Natural killer cell (primary cell): ENCODE measurements at regions of chr15 and their contacts with region 1.

Region 1: DNA sequence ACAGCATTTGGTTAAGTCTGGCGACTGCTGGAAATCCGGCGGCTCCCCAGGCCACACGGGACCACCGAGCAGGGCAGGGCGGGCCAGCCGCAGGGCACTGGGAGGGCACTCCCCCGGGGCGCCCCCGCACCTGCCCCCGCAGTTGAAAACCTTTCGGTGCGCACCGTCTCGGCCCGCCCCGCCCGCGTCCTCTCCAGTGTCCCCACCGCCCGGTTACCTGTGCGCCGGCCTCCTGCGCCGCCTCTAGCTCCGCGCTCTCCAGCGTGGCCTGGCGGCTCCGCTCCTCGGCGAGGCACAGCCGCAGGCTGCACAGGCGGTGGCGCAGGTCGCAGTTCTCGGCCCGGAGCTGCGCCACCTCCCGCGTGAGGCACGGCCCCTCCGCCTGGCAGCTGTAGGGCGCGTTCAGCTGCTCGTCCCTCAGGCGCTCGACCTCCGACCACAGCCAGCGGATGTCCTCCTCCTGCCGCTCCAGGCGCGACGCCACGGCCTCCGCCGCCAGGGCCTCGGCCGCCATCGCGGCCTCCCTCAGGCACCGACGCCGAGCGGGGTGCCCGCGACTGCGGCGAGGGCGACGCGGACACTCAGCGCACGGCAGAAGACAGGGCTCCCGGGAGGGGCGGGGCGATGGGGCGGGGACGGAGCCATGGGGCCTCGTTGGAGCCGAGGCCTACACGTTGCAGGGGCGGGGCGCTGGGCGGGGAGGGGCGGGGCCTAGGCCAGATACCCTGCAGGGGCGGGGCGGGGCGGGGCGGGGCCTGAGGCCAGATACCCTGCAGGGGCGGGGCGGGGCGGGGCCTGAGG is at the start of gene TARS3:
- DNase-seq: peak; percentile 85 to 96
- ATAC-seq: peak; percentile 89 to 99 (median 91)
- H3K4me3 ChIP-seq: peak within 1 kb of the TSS; percentile 42
- H3K4me3 Mint-ChIP-seq: peak within 1 kb of the TSS; percentile 82
- H3K27ac ChIP-seq: peak within 1 kb of the TSS; percentile 68
- H3K27ac Mint-ChIP-seq: peak within 1 kb of the TSS; percentile 77 to 81
- H3K4me1 ChIP-seq: peaks cover 16% of the 10 kb centered on the region
- H3K4me1 Mint-ChIP-seq: peaks cover 19 to 27% of the 10 kb centered on the region in 2 donors
- H3K27me3 ChIP-seq: no peaks in the 10 kb centered on the region
- H3K27me3 Mint-ChIP-seq: no peaks in the 10 kb centered on the region
- CTCF ChIP-seq: no peak
- total RNA-seq, gene TARS3: 11.6 to 20.5 (median 12.1) TPM

Region 2: GRCh38 chr15:101558221-101558933 is 165.7 kb before region 1 on chr15:
- intact Hi-C with region 1: no loop called
- DNase-seq: no peak
- ATAC-seq: no peak
- H3K4me3 ChIP-seq: no peak overlapping the region
- H3K4me3 Mint-ChIP-seq: no peak overlapping the region
- H3K27ac ChIP-seq: no peak overlapping the region
- H3K27ac Mint-ChIP-seq: no peak overlapping the region
- H3K4me1 ChIP-seq: no peaks in the 10 kb centered on the region
- H3K4me1 Mint-ChIP-seq: no peaks in the 10 kb centered on the region
- H3K27me3 ChIP-seq: peaks cover under 1% of the 10 kb centered on the region
- H3K27me3 Mint-ChIP-seq: peaks cover 8 to 23% of the 10 kb centered on the region in 2 donors
- CTCF ChIP-seq: no peak

Region 3: DNA sequence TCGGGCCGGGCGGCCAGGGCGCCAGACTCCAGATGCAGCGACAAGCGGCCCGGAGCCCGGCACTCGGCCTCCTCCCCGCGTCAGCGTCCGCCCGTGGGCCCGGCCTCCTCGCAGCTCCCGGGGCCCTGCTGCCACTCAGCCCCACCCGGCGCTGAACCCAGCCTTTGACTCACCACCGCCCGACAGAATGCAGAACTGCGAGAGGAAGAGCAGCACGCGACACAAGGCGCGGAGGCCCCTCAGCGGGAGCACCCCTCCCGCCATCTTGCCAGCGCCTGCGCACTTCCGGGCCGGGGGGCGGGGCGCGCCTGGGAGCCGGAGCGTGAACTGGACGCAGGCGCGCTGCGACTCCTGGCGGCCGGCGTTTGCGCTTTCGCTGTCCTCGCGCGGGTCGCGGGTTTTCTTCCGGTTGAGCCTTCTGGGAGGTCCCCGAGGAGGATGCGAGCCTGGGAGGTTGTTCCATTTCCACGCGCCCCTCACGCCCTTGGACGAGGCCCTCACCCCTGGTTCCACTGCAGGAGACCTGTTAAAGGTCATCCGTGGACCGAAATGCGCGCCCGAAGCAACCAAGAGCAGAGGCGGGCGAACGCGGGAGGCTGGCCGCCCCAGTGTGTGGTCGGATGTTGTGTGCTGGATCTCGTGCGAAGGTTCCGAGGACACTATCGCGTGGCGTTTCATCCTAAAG is 71.8 kb before region 1 on chr15 and contains the start of gene TM2D3:
- intact Hi-C with region 1: loop called (anchors 2 kb)
- DNase-seq: peak; percentile 97 to 98
- ATAC-seq: peak; percentile 90 to 98 (median 91)
- H3K4me3 ChIP-seq: peak within 1 kb of the TSS; percentile 87
- H3K4me3 Mint-ChIP-seq: peak within 1 kb of the TSS; percentile 92
- H3K27ac ChIP-seq: peak within 1 kb of the TSS; percentile 95
- H3K27ac Mint-ChIP-seq: peak within 1 kb of the TSS; percentile 93 to 96
- H3K4me1 ChIP-seq: peaks cover 19% of the 10 kb centered on the region
- H3K4me1 Mint-ChIP-seq: peaks cover 24 to 29% of the 10 kb centered on the region in 2 donors
- H3K27me3 ChIP-seq: no peaks in the 10 kb centered on the region
- H3K27me3 Mint-ChIP-seq: no peaks in the 10 kb centered on the region
- CTCF ChIP-seq: peak; percentile 81
- total RNA-seq, gene TM2D3: 59.4 to 76.4 (median 71.2) TPM